ENCODE measurements at regions of chr9 and their contacts with region 1.

Region 1: GRCh38 chr9:137114610-137115391 is at the start of gene DPP7:
- DNase-seq: peak; percentile 89
- ATAC-seq: peak; percentile 90
- H3K4me3 Mint-ChIP-seq: peak within 1 kb of the TSS; percentile 72
- H3K27ac Mint-ChIP-seq: peak within 1 kb of the TSS; percentile 51
- H3K4me1 Mint-ChIP-seq: peaks cover 13% of the 10 kb centered on the region
- H3K27me3 Mint-ChIP-seq: no peaks in the 10 kb centered on the region
- total RNA-seq, gene DPP7: 188 to 204 TPM

Region 2: GRCh38 chr9:137095664-137096517 is 18.9 kb before region 1 on chr9:
- CTCF ChIA-PET with region 1: interaction called, 7 read pairs
- POLR2A ChIA-PET with region 1: interaction called, 5 read pairs
- intact Hi-C with region 1: loop called (anchors 1 to 2 kb)
- DNase-seq: peak; percentile 94
- ATAC-seq: peak; percentile 98
- H3K4me3 Mint-ChIP-seq: peak overlapping the region; percentile 70
- H3K27ac Mint-ChIP-seq: peak overlapping the region; percentile 91
- H3K4me1 Mint-ChIP-seq: peaks cover 17% of the 10 kb centered on the region
- H3K27me3 Mint-ChIP-seq: no peaks in the 10 kb centered on the region

Region 3: GRCh38 chr9:137129456-137130175 is 14.8 kb after region 1 on chr9:
- CTCF ChIA-PET with region 1: interaction called, 9 read pairs
- POLR2A ChIA-PET with region 1: no interaction called
- intact Hi-C with region 1: loop called in 1 of 2 experiments (anchors 1 kb)
- DNase-seq: peak; percentile 95
- ATAC-seq: peak; percentile 96
- H3K4me3 Mint-ChIP-seq: peak overlapping the region; percentile 89
- H3K27ac Mint-ChIP-seq: peak overlapping the region; percentile 70
- H3K4me1 Mint-ChIP-seq: peaks cover 21% of the 10 kb centered on the region
- H3K27me3 Mint-ChIP-seq: peaks cover 5% of the 10 kb centered on the region

Measured in activated CD4-positive, alpha-beta T cell treated with anti-CD3 and anti-CD28 coated beads for 36 hours (primary cell).